ENCODE measurements at regions of chr20 and their contacts with region 1.

Region 1: DNA sequence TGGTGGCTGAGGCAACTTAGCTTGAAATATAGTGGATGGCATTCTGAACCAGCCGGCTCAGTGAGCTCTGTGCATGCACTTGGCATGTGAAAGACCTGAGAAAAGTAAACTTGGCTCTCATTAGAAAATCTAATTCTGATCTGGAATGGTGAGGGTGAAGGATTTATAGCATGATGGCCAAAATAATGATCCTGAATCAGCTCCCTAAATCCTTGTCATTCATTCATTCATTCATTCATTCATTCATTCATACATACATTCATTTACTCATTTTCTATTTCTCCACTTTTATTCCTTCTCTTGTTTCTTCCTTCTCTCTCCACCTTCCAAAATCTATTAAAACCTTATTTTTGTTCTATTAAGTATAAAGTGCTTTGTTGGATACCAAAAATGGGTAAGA is 681.1 kb downstream of the DHX35 start:
- DNase-seq: no peak
- H3K4me3 ChIP-seq: no peak overlapping the region
- H3K27ac ChIP-seq: no peak overlapping the region
- H3K4me1 ChIP-seq: no peaks in the 10 kb centered on the region
- H3K27me3 ChIP-seq: no peaks in the 10 kb centered on the region
- CTCF ChIP-seq: no peak
- POLR2A ChIP-seq: no peak

Region 2: GRCh38 chr20:39503902-39504709 is 139.2 kb before region 1 on chr20:
- intact Hi-C with region 1: no loop called
- DNase-seq: no peak
- H3K4me3 ChIP-seq: no peak overlapping the region
- H3K27ac ChIP-seq: no peak overlapping the region
- H3K4me1 ChIP-seq: no peaks in the 10 kb centered on the region
- H3K27me3 ChIP-seq: no peaks in the 10 kb centered on the region
- CTCF ChIP-seq: no peak
- POLR2A ChIP-seq: no peak

Region 3: GRCh38 chr20:39574061-39574460 is 69.2 kb before region 1 on chr20:
- intact Hi-C with region 1: loop called (anchors 2 kb)
- DNase-seq: no peak
- H3K4me3 ChIP-seq: no peak overlapping the region
- H3K27ac ChIP-seq: no peak overlapping the region
- H3K4me1 ChIP-seq: no peaks in the 10 kb centered on the region
- H3K27me3 ChIP-seq: no peaks in the 10 kb centered on the region
- CTCF ChIP-seq: no peak
- POLR2A ChIP-seq: no peak

Region 4: GRCh38 chr20:39661833-39662232 is 18.5 kb after region 1 on chr20:
- intact Hi-C with region 1: no loop called
- DNase-seq: no peak
- H3K4me3 ChIP-seq: no peak overlapping the region
- H3K27ac ChIP-seq: no peak overlapping the region
- H3K4me1 ChIP-seq: no peaks in the 10 kb centered on the region
- H3K27me3 ChIP-seq: no peaks in the 10 kb centered on the region
- CTCF ChIP-seq: no peak
- POLR2A ChIP-seq: no peak

Measured in breast epithelium (tissue), 4 donors.